ENCODE measurements at regions of chr10 and their contacts with region 1.

Region 1: DNA sequence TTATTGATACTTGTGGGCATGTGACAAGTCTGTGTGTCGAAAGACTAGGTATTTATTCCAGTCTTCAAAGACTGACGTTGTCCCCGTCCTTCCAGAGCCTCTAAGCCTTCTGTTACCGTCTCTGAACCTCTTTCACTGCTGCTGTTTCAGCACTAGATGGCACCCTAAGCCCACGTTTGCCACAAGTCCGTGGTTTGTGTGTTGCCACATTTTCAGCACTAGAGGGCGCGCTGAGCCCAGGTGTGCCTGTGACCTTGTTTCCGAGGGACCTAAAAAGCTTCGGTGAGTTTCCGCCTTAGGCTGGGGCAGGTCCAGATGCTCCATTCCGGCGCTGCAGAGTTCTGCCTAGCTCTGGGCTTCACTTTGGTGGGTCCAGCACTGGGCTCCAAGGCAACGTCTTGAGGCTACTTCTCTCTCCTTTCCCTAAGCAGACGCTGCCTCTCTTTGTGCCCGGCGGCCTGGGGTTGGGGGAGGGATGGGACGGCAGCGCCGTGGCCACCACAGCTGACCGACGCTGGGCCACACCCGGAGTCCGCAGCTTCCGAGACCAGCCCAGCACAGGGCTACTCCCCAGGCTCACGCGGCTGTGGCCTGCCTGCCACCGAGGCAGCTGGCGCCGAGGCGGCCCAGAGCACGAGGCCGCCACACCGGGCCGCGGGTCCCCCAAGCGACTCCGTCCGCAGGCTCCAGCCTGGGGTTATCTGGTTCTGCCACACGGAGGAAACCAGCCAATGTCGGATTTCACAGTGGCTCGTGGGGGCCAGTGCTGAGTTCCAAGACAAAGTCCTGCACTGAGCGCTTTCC is 520.2 kb downstream of the REEP3 start:
- DNase-seq: peak; percentile 65
- ATAC-seq: peak; percentile 97
- H3K4me3 Mint-ChIP-seq: peak overlapping the region; percentile 75
- H3K27ac Mint-ChIP-seq: peak overlapping the region; percentile 53
- H3K4me1 Mint-ChIP-seq: peaks cover 8% of the 10 kb centered on the region
- H3K27me3 Mint-ChIP-seq: peaks cover 2% of the 10 kb centered on the region
- CTCF ChIP-seq: peak; percentile 90

Region 2: GRCh38 chr10:63738410-63738809 is 303.0 kb before region 1 on chr10:
- CTCF ChIA-PET with region 1: no interaction called
- POLR2A ChIA-PET with region 1: no interaction called
- intact Hi-C with region 1: no loop called
- DNase-seq: no peak
- ATAC-seq: no peak
- H3K4me3 Mint-ChIP-seq: no peak overlapping the region
- H3K27ac Mint-ChIP-seq: no peak overlapping the region
- H3K4me1 Mint-ChIP-seq: no peaks in the 10 kb centered on the region
- H3K27me3 Mint-ChIP-seq: no peaks in the 10 kb centered on the region
- CTCF ChIP-seq: no peak

Region 3: GRCh38 chr10:63866075-63866746 is 175.2 kb before region 1 on chr10:
- CTCF ChIA-PET with region 1: interaction called, 3 read pairs
- POLR2A ChIA-PET with region 1: no interaction called
- intact Hi-C with region 1: loop called (anchors 5 kb)
- DNase-seq: no peak
- ATAC-seq: no peak
- H3K4me3 Mint-ChIP-seq: no peak overlapping the region
- H3K27ac Mint-ChIP-seq: no peak overlapping the region
- H3K4me1 Mint-ChIP-seq: peaks cover 6% of the 10 kb centered on the region
- H3K27me3 Mint-ChIP-seq: peaks cover 33% of the 10 kb centered on the region
- CTCF ChIP-seq: peak; percentile 55

Region 4: GRCh38 chr10:64332561-64332960 is 291.2 kb after region 1 on chr10:
- CTCF ChIA-PET with region 1: no interaction called
- POLR2A ChIA-PET with region 1: no interaction called
- intact Hi-C with region 1: no loop called
- DNase-seq: no peak
- ATAC-seq: no peak
- H3K4me3 Mint-ChIP-seq: no peak overlapping the region
- H3K27ac Mint-ChIP-seq: no peak overlapping the region
- H3K4me1 Mint-ChIP-seq: no peaks in the 10 kb centered on the region
- H3K27me3 Mint-ChIP-seq: no peaks in the 10 kb centered on the region
- CTCF ChIP-seq: no peak